GM12878 (cell line): ENCODE measurements at regions of chr3 and their contacts with region 1.

Region 1: DNA sequence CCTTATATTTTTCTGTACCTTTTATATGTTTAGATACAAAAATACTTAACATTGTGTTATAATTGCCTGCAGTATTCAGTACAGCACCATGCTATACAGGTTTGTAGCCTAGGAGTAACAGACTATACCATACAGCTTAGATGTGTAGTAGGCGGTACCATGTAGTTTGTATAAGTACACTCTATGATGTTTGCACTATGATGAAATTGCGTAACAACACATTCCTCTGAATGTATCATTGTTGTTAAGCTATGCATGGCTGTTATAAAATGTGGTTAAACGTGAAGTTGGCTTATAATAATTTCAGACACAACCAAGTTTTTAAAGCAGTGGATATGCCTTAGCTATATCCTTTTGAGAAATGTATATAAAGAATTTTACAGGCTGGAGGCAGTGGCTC is 328.3 kb downstream of the PLCL2 start:
- DNase-seq: no peak
- ATAC-seq: no peak
- H3K4me3 ChIP-seq: no peak overlapping the region
- H3K27ac ChIP-seq: no peak overlapping the region
- H3K4me1 ChIP-seq: no peaks in the 10 kb centered on the region
- H3K27me3 ChIP-seq: no peaks in the 10 kb centered on the region
- CTCF ChIP-seq: no peak
- EP300 ChIP-seq: no peak
- POLR2A ChIP-seq: no peak
- RAD21 ChIP-seq: no peak

Region 2: GRCh38 chr3:17166369-17166768 is 46.7 kb before region 1 on chr3:
- CTCF ChIA-PET with region 1: no interaction called
- POLR2A ChIA-PET with region 1: no interaction called
- RAD21 ChIA-PET with region 1: no interaction called
- SMC1A ChIA-PET with region 1: no interaction called
- in situ Hi-C with region 1: no loop called
- intact Hi-C with region 1: no loop called
- DNase-seq: no peak
- ATAC-seq: no peak
- H3K4me3 ChIP-seq: no peak overlapping the region
- H3K27ac ChIP-seq: no peak overlapping the region
- H3K4me1 ChIP-seq: no peaks in the 10 kb centered on the region
- H3K27me3 ChIP-seq: no peaks in the 10 kb centered on the region
- CTCF ChIP-seq: peak in 1 of 3 experiments; percentile 10; a peak in 1 of 6 replicates
- EP300 ChIP-seq: no peak
- POLR2A ChIP-seq: no peak
- RAD21 ChIP-seq: no peak

Region 3: DNA sequence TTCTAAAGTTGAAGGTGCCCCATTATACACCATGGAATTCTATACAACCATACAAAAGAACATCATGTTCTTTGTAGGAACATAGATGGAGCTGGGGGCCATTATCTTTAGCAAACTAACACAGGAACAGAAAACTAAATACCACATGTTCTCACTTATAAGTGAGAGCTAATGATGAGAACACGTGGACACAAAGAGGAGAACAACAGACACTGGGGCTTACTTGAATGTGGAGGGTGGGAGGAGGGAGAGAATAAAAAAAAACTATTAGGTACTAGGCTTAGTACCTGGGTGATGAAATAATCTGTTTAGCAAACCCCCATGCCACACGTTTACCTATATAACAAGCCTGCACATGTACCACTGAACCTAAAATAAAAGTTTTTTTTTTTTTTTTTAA is 14.4 kb after region 1 on chr3:
- CTCF ChIA-PET with region 1: interaction called, 13 read pairs
- POLR2A ChIA-PET with region 1: no interaction called
- RAD21 ChIA-PET with region 1: no interaction called
- SMC1A ChIA-PET with region 1: interaction called, 23 read pairs
- in situ Hi-C with region 1: no loop called
- intact Hi-C with region 1: no loop called
- DNase-seq: no peak
- ATAC-seq: no peak
- H3K4me3 ChIP-seq: no peak overlapping the region
- H3K27ac ChIP-seq: no peak overlapping the region
- H3K4me1 ChIP-seq: peaks cover 5% of the 10 kb centered on the region; the same call in 1 of the 2 replicates
- H3K27me3 ChIP-seq: no peaks in the 10 kb centered on the region
- CTCF ChIP-seq: no peak
- EP300 ChIP-seq: no peak
- POLR2A ChIP-seq: no peak
- RAD21 ChIP-seq: no peak